MCF 10A (cell line): ENCODE measurements at regions of chr16 and their contacts with region 1.

Region 1: DNA sequence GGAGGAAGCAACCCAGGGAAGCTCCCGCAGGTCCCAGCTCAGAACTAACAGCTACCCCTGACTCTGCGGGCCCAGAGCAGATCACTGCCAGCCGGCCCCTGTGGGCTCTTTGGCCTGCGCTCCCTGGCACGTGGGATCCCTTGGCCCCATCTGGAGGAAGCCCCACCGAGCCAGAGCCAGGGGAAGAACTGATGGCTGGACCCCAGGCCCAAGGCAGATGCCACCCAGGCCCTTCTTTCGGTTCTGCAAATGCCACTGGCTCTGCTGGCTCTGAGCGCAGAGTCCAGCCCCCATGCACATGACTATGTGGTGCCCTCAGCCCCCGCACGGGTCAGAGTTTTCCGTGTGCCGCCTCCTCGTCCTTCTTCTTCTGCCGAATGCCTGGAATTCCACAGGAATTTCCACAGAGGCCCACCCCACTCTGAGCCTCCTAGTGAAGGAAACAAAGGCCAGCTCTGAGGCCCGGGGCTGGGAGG is 35.8 kb upstream of the SNN start:
- DNase-seq: no peak
- H3K4me3 Mint-ChIP-seq: no peak overlapping the region
- H3K27ac Mint-ChIP-seq: no peak overlapping the region
- H3K4me1 Mint-ChIP-seq: peaks cover 20% of the 10 kb centered on the region
- H3K27me3 Mint-ChIP-seq: no peaks in the 10 kb centered on the region
- CTCF ChIP-seq: no peak

Region 2: GRCh38 chr16:11613381-11614303 is 18.9 kb before region 1 on chr16:
- CTCF ChIA-PET with region 1: no interaction called
- POLR2A ChIA-PET with region 1: interaction called, 16 read pairs
- intact Hi-C with region 1: loop called (anchors 1 kb)
- DNase-seq: peak; percentile 96
- H3K4me3 Mint-ChIP-seq: peak overlapping the region; percentile 39
- H3K27ac Mint-ChIP-seq: peak overlapping the region; percentile 90
- H3K4me1 Mint-ChIP-seq: peaks cover 28% of the 10 kb centered on the region
- H3K27me3 Mint-ChIP-seq: no peaks in the 10 kb centered on the region
- CTCF ChIP-seq: no peak

Region 3: GRCh38 chr16:11689031-11689761 is 56.7 kb after region 1 on chr16:
- CTCF ChIA-PET with region 1: no interaction called
- POLR2A ChIA-PET with region 1: no interaction called
- intact Hi-C with region 1: no loop called
- DNase-seq: no peak
- H3K4me3 Mint-ChIP-seq: no peak overlapping the region
- H3K27ac Mint-ChIP-seq: no peak overlapping the region
- H3K4me1 Mint-ChIP-seq: no peaks in the 10 kb centered on the region
- H3K27me3 Mint-ChIP-seq: no peaks in the 10 kb centered on the region
- CTCF ChIP-seq: no peak